Mammary epithelial cell (primary cell): ENCODE measurements at regions of chrX and their contacts with region 1.

Region 1: GRCh38 chrX:134603806-134604700 is 54.2 kb downstream of the PLAC1 start:
- DNase-seq: peak; percentile 74
- H3K4me3 ChIP-seq: no peak overlapping the region
- H3K27ac ChIP-seq: peak overlapping the region; percentile 68
- H3K4me1 ChIP-seq: peaks cover 26% of the 10 kb centered on the region
- H3K27me3 ChIP-seq: no peaks in the 10 kb centered on the region
- CTCF ChIP-seq: peak; percentile 18 to 48

Region 2: DNA sequence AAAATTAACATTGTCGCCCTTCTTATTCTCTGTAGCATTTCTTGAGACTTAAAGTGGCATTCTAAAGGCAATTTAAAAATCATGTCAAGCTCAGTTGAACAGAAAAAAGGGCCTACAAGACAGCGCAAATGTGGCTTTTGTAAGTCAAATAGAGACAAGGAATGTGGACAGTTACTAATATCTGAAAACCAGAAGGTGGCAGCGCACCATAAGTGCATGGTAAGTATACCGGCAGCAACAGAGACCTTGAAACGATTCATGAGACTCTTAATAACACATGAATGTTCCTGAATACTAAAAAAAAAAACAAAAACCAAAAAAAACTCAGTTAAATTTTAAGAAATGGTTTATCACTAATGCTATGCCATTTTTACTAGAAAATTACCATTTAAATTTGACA is 226.5 kb before region 1 on chrX:
- CTCF ChIA-PET with region 1: no interaction called
- dilution Hi-C with region 1: no loop called
- in situ Hi-C with region 1: no loop called
- intact Hi-C with region 1: no loop called
- DNase-seq: peak; percentile 32
- H3K4me3 ChIP-seq: no peak overlapping the region
- H3K27ac ChIP-seq: no peak overlapping the region
- H3K4me1 ChIP-seq: no peaks in the 10 kb centered on the region
- H3K27me3 ChIP-seq: no peaks in the 10 kb centered on the region
- CTCF ChIP-seq: peak; percentile 44 to 58

Region 3: DNA sequence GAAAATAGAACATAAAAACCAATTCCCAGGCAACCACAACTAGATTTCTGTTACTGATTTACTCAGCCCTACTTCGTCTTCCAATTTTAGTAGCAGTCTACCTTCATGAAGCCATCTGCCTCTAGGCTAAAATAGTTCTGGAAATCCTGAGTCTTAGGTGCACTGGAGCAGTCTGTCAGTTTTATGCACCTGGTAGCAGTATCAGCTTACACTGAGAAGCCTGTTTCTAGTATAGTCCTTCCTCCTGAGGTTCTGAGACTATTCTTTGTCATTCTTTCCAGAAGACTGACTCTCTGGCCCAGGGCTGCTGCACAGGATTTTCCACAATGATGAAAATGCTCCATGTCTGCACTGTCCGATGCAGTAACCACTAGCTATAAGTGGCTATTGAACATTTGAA is 161.0 kb before region 1 on chrX:
- CTCF ChIA-PET with region 1: no interaction called
- dilution Hi-C with region 1: no loop called
- in situ Hi-C with region 1: no loop called
- intact Hi-C with region 1: no loop called
- DNase-seq: no peak
- H3K4me3 ChIP-seq: no peak overlapping the region
- H3K27ac ChIP-seq: no peak overlapping the region
- H3K4me1 ChIP-seq: no peaks in the 10 kb centered on the region
- H3K27me3 ChIP-seq: no peaks in the 10 kb centered on the region
- CTCF ChIP-seq: no peak

Region 4: GRCh38 chrX:134622056-134622812 is 18.2 kb after region 1 on chrX:
- CTCF ChIA-PET with region 1: interaction called, 3 read pairs
- dilution Hi-C with region 1: no loop called
- in situ Hi-C with region 1: no loop called
- intact Hi-C with region 1: loop called (anchors 2 kb)
- DNase-seq: peak; percentile 77
- H3K4me3 ChIP-seq: no peak overlapping the region
- H3K27ac ChIP-seq: peak overlapping the region; percentile 58
- H3K4me1 ChIP-seq: peaks cover 25% of the 10 kb centered on the region
- H3K27me3 ChIP-seq: no peaks in the 10 kb centered on the region
- CTCF ChIP-seq: no peak

Region 5: GRCh38 chrX:134670134-134670924 is 66.3 kb after region 1 on chrX:
- CTCF ChIA-PET with region 1: no interaction called
- dilution Hi-C with region 1: no loop called
- in situ Hi-C with region 1: no loop called
- intact Hi-C with region 1: loop called (anchors 1 kb)
- DNase-seq: peak; percentile 80
- H3K4me3 ChIP-seq: no peak overlapping the region
- H3K27ac ChIP-seq: peak overlapping the region; percentile 52
- H3K4me1 ChIP-seq: peaks cover 22% of the 10 kb centered on the region
- H3K27me3 ChIP-seq: no peaks in the 10 kb centered on the region
- CTCF ChIP-seq: no peak

Region 6: GRCh38 chrX:134764212-134764785 is 160.2 kb after region 1 on chrX:
- CTCF ChIA-PET with region 1: no interaction called
- dilution Hi-C with region 1: no loop called
- in situ Hi-C with region 1: no loop called
- intact Hi-C with region 1: loop called (anchors 5 kb)
- DNase-seq: peak; percentile 30
- H3K4me3 ChIP-seq: no peak overlapping the region
- H3K27ac ChIP-seq: no peak overlapping the region
- H3K4me1 ChIP-seq: peaks cover 6% of the 10 kb centered on the region
- H3K27me3 ChIP-seq: no peaks in the 10 kb centered on the region
- CTCF ChIP-seq: peak; percentile 29 to 31